ENCODE measurements at regions of chr16 and their contacts with region 1.

Region 1: DNA sequence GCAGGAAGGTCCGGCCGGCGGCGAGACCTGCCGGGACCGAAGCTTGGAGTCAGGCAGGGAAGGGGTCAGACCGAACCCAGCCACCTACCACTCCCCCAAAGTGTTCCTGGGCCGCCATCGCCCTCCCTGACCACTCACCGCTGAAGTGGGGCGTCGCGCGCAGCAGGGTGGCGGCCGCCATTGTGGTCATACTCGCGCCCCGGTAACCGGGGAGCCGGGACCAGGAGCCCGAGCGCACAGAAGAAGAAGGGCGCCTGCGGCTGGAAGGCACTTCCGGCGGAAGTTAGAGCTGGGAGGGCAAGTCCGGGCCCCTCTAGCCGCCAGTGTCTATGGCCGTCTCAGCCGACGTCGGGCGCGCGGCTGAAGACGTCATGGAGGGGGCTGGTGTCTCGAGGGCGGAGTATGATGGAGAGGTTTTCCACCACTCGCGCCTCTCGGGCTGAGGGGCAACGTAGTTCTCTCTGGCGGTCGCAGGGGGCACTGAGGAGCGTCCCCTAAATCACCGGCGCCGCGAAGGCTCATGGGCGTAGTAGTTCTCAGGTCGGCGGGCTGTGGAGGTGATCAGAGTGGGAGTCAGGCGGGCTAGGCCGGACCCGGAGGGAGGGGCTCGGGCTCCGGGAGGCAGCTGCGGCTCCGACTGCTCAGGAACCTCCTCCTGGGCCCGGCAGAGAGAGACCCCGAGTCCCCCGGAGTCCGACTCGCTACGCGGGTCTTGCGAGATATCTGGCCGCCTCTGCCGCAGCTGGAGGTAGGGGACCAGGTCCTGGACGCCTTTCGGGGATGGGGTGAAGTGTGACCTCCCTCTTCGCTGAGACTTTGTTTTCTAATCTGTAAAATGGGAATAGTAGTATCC is at the start of gene TUFM:
- DNase-seq: peak; percentile 95 to 99
- H3K4me3 ChIP-seq: peak within 1 kb of the TSS; percentile 75 to 99
- H3K27ac ChIP-seq: peak within 1 kb of the TSS; percentile 89 to 94
- H3K4me1 ChIP-seq: peaks cover 13 to 19% of the 10 kb centered on the region in 2 donors
- H3K27me3 ChIP-seq: no peaks in the 10 kb centered on the region
- CTCF ChIP-seq: peak; percentile 49 to 93 (median 77)
- total RNA-seq, gene TUFM: 92.5 TPM

Region 2: DNA sequence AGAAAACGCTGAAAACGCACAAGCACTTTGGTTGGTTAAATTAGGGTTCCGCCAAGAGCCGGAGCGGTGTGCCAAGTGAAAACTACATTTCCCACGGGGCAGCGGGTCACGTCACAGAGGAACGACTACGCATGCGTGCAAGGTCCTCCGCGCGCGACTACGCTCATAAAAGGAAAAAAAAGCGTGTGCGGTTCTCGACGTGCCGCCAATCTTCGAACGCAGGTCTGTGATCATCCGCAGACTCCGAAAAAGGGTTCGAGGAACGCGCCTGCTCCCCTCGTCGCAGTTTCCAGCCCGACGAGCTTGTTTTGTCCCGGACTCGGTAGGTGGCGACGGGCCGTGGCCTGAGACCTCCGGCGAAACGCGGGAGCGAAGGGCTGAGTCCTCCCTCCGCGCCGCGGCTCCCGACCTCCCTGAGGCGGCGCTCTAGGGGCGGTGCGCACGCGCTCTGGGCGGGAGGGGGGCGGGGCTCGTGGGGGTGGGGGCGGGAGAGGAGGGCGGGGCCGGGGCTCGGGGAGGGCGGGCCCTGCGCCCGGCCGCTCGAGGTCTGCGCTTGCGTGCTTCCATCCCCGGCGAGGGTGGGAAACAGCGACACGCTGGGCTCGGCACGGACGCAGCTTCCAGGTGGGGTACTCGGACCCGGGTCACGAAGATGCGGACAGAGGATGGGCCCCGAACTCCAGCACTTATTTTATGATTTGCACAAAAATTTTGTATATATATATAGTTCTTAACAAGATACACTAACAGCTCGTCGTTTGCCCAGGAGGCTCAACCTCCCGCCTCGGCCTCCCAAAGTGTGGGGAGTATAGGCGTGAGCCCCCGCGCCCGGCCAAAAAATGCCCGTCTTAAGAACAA is 292.3 kb before region 1 on chr16 and contains the start of gene SGF29:
- intact Hi-C with region 1: loop called (anchors 10 kb)
- DNase-seq: peak; percentile 53 to 95
- H3K4me3 ChIP-seq: peak within 1 kb of the TSS; percentile 61 to 62
- H3K27ac ChIP-seq: peak within 1 kb of the TSS; percentile 87 to 96
- H3K4me1 ChIP-seq: peaks cover 0 to 7% of the 10 kb centered on the region in 2 donors
- H3K27me3 ChIP-seq: no peaks in the 10 kb centered on the region
- CTCF ChIP-seq: peak in 2 of 3 experiments; percentile 32 to 35
- total RNA-seq, gene SGF29: 14.0 TPM

Region 3: GRCh38 chr16:28823872-28824716 is 22.2 kb before region 1 on chr16:
- intact Hi-C with region 1: loop called (anchors 1 kb)
- DNase-seq: peak; percentile 88 to 98
- H3K4me3 ChIP-seq: peak overlapping the region; percentile 98 to 100
- H3K27ac ChIP-seq: peak overlapping the region; percentile 99 to 100
- H3K4me1 ChIP-seq: peaks cover 0 to 20% of the 10 kb centered on the region in 2 donors
- H3K27me3 ChIP-seq: no peaks in the 10 kb centered on the region
- CTCF ChIP-seq: peak in 1 of 3 experiments; percentile 18

Region 4: DNA sequence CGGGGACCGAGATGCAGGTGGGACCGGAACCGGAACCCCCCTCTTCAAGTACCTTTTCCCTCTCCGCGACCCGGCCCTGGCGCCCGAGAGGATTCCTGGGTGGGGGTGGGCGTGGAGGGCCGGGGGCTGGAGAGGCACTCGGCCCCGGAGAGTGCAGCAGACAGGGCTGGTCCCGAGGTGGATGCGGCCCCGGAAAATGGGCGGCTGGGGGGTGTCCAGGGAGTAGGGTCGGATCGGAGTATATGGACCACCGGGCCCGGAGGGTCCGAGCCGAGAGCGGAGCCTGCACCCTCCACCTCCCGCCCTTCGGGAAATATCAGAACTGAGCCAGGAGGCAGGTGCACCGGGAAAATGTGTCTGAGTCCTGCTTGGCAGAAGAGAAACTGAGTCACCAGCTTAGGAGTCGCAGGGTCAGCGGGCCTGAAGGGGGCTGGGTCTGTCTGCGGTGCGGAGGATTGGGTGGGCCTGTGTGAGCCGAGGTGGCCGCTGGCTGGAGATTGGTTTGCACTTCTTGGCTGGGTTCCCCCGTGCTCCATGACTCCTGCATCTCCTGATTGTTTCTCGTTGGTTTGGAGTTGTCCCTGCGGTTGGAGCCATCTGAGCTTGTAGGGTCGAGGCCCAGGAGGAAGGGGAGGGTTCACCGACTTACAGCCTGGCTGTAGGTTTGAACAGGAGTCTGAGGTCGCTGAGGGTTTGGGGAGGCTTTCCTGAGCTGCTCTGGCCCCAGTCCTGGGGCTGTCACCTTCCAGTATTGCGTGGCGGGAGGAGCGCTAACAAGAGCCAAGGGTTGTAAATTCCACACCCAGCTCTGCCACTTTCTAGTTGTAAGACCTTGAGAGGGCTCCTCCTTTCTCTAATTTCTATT is 17.9 kb after region 1 on chr16:
- intact Hi-C with region 1: loop called (anchors 1 kb)
- DNase-seq: no peak
- H3K4me3 ChIP-seq: peak overlapping the region; percentile 81 to 98
- H3K27ac ChIP-seq: peak overlapping the region; percentile 89 to 93
- H3K4me1 ChIP-seq: peaks cover 0 to 15% of the 10 kb centered on the region in 2 donors
- H3K27me3 ChIP-seq: no peaks in the 10 kb centered on the region
- CTCF ChIP-seq: no peak

Region 5: DNA sequence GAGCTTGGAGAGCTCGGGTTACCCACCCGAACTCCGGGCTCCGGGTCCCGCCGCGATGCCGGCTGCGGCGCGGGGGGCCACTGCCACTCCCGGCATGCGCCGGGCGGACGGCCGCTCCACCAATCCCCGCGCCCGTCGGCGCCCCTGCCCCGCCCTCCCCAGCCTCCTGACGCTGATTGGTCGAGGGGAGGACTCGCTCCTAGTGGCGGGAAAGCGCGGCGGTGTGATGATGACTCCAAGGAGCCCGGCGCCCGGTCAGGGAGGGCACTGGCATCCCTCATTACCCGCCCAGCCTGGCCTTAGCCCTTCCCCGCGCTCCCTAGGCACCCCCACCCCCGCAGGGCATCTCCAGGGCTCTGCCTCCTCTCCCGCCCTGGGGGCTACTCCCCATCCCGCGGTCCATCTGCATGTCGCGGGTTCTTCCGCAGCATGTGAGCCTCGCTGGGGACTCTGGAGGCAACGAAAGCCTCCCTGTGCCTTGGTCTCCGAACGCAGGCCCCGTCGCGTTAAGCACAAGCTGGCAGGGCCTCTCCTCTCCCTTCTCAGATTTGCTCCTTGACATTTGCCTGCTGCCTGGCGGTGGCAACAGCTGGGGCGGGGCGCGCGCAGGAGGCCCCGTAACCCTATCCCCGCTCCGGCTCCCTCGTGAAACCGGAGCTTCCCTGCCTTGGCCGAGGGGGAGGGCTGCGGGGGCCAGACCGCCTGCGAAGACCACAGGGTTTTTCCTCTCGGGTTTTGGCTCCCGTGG is 33.7 kb after region 1 on chr16:
- intact Hi-C with region 1: no loop called
- DNase-seq: peak; percentile 52 to 91
- H3K4me3 ChIP-seq: peak overlapping the region; percentile 51 to 79
- H3K27ac ChIP-seq: no peak overlapping the region
- H3K4me1 ChIP-seq: peaks cover 9 to 10% of the 10 kb centered on the region in 2 donors
- H3K27me3 ChIP-seq: no peaks in the 10 kb centered on the region
- CTCF ChIP-seq: no peak

Region 6: DNA sequence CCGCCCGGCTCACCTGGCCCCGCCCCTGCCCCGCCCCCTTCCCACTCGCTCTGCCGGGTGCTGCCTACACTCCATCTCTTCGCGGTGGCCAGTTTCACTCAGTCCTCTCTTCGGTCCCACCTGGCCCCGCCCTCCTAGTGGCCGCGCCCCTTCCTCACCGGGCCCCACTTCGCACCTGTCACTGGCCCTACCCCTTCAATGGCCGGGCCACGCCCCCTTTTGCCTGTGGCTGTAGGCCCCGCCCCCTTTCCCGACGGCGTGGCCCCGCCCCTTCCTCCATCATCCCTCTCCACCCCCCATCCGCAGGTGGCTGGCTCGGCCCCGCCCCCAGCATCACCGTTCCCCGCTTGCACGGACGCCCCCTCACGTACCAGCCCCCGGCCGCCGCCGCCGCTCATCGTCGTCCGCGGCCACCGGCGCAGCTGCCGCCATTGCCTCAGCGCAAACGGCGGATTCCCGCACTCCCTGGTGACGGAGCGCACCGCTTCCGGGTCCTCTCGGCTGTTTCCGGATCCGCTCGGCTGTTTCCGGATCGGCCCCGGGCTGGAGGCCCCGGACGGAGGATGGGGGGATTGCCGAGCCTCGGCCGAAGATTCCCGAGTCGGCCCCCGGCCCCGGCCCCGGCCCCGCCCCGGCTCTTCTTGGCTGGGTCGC is 78.6 kb after region 1 on chr16 and contains the start of gene RABEP2:
- intact Hi-C with region 1: loop called (anchors 2 kb)
- DNase-seq: peak; percentile 45 to 94
- H3K4me3 ChIP-seq: peak within 1 kb of the TSS; percentile 80 to 90
- H3K27ac ChIP-seq: peak within 1 kb of the TSS; percentile 96 to 99
- H3K4me1 ChIP-seq: peaks cover 6 to 9% of the 10 kb centered on the region in 2 donors
- H3K27me3 ChIP-seq: no peaks in the 10 kb centered on the region
- CTCF ChIP-seq: no peak
- total RNA-seq, gene RABEP2: 64.5 TPM

Region 7: DNA sequence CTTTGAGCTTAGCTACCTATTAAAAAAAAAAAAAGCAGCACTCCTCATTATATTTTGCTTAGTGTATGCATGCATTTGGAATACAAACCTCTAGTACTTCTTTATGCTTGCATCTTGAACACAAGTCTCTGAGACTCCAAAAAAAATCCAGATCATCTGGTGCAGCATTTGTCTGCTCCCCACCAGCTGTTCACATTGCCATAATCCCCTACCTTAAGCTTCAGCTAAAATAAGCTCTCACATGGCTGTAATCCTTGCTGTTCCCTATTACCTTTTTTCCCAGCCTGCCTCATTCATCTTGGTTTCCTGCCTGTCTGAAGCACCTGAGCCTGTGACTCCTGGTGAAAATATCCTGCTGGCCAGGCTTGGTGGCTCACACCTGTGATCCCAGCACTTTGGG is 97.0 kb after region 1 on chr16:
- intact Hi-C with region 1: loop called (anchors 2 kb)
- DNase-seq: no peak
- H3K4me3 ChIP-seq: no peak overlapping the region
- H3K27ac ChIP-seq: no peak overlapping the region
- H3K4me1 ChIP-seq: peaks cover 0 to 4% of the 10 kb centered on the region in 2 donors
- H3K27me3 ChIP-seq: no peaks in the 10 kb centered on the region
- CTCF ChIP-seq: no peak

Region 8: DNA sequence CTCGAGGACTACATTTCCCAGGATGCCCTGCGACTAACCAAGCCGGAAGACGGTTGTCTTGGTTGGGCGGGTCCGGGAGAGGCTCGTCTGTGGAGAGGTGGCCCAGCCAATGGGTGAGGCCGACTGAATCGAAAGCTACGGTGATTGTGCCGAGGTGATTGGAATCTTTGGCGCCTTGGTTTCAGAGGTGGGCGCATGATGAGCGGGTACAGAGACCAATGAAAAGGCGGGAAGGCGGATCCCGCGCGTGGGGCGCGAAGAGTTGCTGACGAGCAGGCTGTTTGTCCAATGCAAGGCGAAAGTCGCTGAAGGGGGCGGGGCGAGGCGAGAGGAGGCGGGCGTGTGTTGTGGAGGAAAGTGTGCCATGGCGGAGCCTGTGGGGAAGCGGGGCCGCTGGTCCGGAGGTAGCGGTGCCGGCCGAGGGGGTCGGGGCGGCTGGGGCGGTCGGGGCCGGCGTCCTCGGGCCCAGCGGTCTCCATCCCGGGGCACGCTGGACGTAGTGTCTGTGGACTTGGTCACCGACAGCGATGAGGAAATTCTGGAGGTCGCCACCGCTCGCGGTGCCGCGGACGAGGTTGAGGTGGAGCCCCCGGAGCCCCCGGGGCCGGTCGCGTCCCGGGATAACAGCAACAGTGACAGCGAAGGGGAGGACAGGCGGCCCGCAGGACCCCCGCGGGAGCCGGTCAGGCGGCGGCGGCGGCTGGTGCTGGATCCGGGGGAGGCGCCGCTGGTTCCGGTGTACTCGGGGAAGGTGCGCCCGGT is 104.5 kb after region 1 on chr16 and contains the start of gene NFATC2IP:
- intact Hi-C with region 1: loop called (anchors 1 kb)
- DNase-seq: peak; percentile 99 to 100
- H3K4me3 ChIP-seq: peak within 1 kb of the TSS; percentile 71 to 100
- H3K27ac ChIP-seq: peak within 1 kb of the TSS; percentile 84 to 89
- H3K4me1 ChIP-seq: peaks cover 3 to 9% of the 10 kb centered on the region in 2 donors
- H3K27me3 ChIP-seq: no peaks in the 10 kb centered on the region
- CTCF ChIP-seq: no peak
- total RNA-seq, gene NFATC2IP: 11.2 TPM

Measured in ascending aorta (tissue), 2 donors.